ENCODE measurements at regions of chr15 and their contacts with region 1.

Region 1: DNA sequence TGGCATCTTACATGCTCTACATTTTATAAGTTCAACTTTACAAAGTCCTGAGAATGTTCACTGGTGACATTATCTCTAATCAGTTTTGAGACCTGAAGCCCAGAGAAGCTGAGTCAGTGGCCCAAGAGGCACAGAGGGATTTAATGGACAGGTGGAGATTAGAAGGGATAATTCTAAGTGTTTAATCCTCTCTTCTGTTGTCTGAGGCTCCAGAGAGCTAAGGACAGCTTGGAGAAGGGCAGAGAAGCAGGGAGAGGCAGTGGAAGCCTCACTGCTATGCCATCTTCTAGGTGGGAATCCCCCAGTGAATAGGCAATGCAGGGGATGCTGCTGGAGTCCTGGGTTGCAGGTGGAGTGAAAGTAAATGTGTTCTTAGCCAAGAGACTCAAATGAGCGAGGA is 369.4 kb upstream of the SLCO3A1 start:
- DNase-seq: no peak
- ATAC-seq: no peak

Region 2: DNA sequence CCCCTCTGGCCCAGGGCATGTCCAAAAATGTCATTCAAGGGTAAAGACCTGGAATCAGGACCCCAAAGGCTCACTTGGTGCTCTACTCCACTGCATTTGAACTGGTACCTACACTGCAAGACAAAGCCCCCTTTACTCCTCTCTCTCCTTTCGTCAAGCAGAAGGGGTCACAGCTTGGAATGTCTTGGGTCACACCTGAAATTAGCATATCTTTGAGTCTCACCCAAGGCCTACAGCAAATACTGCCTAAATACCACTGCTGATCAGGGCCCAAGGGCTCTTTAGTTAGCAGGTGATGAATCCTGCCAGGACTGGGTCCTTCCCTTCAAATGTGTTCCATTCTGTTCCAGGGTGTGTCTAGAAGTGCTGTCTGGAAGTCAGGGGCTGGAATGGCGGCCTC is 63.5 kb before region 1 on chr15:
- intact Hi-C with region 1: loop called in 1 of 2 experiments (anchors 2 kb)
- DNase-seq: no peak
- ATAC-seq: no peak

Measured in left cardiac atrium (tissue), 4 donors.